ENCODE measurements at regions of chr3 and their contacts with region 1.

Region 1: DNA sequence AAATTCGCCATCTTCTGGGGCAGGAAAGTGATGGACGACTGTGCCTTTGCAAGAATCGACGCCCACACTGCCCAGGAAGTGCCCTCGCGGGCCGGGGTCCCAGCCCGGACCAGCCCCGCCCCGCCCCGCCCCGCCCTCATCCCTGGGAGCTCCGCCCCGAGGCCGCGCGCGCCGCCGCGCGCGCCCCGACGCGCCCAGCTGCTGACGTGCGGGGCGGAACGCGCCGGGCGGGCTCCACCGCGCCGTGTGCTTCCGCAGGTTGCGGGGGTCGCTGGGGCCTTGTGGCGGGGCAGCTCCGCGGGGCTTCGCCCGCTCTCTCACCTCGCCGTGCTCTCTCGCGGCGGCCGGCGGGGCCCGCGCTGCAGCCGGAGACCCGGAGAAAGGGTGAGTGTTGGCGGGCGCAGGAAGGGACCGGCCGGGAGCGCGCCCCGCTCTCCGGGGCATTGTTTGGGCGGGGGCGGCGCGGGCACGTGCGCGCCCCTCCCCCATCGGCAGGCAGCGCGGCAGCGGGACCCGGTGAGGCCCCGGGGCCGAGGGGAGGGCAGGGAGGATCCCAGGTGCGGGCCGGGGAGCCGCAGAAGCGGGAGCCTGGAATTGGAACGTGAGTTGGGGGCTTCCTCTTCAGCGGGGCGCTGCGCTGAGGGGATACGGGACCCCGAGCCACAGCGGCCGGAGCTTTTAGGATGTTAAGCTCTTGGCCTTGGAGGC is at the start of gene YEATS2:
- DNase-seq: peak; percentile 61
- ATAC-seq: peak; percentile 90
- H3K4me3 ChIP-seq: peak within 1 kb of the TSS; percentile 99
- H3K27ac ChIP-seq: peak within 1 kb of the TSS; percentile 96
- H3K4me1 ChIP-seq: peaks cover 2% of the 10 kb centered on the region
- H3K27me3 ChIP-seq: no peaks in the 10 kb centered on the region
- CTCF ChIP-seq: no peak
- POLR2A ChIP-seq: peak; percentile 75; the same call in 1 of the 2 replicates
- RAD21 ChIP-seq: no peak
- total RNA-seq, gene YEATS2: 43.0 and 45.0 TPM in 2 replicates

Region 2: DNA sequence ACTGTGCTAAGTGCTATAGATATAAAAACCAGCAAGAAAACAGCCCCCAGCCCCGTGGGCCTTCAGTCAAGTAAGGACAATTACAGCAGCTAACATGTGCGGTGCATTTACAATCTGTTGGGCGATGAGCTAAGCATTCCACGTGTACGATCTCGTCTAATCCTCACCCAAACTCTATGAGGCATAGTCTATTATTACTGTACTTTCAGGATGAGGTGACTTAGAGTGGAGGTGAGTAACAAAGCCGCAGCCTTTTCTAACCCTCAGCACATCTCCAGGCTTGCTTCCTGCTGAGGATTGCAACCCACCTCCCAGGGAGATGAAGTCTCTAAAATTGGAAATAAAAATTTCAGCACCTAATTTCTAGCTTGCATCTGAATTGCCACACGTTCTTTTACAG is 216.2 kb before region 1 on chr3:
- CTCF ChIA-PET with region 1: no interaction called
- POLR2A ChIA-PET with region 1: no interaction called
- dilution Hi-C with region 1: no loop called
- in situ Hi-C with region 1: no loop called
- intact Hi-C with region 1: loop called (anchors 2 kb)
- DNase-seq: peak; percentile 50
- ATAC-seq: no peak
- H3K4me3 ChIP-seq: no peak overlapping the region
- H3K27ac ChIP-seq: no peak overlapping the region
- H3K4me1 ChIP-seq: peaks cover 5% of the 10 kb centered on the region
- H3K27me3 ChIP-seq: peaks cover 3% of the 10 kb centered on the region
- CTCF ChIP-seq: no peak
- POLR2A ChIP-seq: no peak
- RAD21 ChIP-seq: no peak

Region 3: DNA sequence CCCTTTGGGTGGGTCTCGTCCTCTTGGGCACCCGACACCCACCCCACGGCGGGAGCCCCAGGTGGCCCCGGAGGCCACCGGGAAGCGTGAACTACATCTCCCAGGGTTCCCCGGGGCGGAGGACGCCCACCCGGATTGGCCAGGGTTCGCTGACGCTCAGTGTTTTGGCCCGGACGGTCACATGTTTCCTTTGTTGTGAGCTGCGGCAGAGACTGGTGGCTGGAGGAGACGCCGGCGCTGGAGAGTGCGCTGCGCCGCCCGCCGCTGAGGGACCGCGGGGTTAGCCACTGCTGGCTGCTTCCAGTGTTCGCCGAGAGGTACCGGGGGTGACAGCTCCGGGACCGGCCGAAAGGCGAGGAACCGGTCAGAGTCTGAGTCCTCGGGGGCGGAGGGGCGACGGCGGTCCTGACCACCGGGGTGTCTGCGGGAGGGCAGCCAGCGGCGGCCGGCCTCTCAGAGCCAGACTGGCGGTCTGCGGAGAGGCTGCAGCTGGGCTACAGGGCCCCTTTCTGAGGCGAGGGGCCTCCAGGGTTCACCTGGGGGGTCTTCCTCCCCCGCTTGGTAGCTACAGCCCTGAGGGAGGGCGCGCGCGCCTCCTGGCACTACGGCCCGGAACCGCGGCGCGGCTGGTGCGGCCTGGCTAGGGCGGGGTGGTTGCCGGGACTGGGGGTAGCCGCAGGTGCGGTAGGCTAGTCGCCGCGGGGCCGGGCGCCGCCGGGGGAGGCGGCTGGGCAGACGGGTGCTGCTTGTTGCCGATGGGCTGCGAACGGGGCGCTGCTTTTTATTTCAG is 62.1 kb before region 1 on chr3 and contains the start of gene KLHL24:
- CTCF ChIA-PET with region 1: no interaction called
- POLR2A ChIA-PET with region 1: no interaction called
- dilution Hi-C with region 1: no loop called
- in situ Hi-C with region 1: no loop called
- intact Hi-C with region 1: loop called (anchors 2 kb)
- DNase-seq: peak; percentile 91
- ATAC-seq: peak; percentile 88
- H3K4me3 ChIP-seq: peak within 1 kb of the TSS; percentile 85
- H3K27ac ChIP-seq: peak within 1 kb of the TSS; percentile 38
- H3K4me1 ChIP-seq: no peaks in the 10 kb centered on the region
- H3K27me3 ChIP-seq: no peaks in the 10 kb centered on the region
- CTCF ChIP-seq: no peak
- POLR2A ChIP-seq: peak; percentile 90
- RAD21 ChIP-seq: no peak
- total RNA-seq, gene KLHL24: 25.6 and 28.3 TPM in 2 replicates

Region 4: DNA sequence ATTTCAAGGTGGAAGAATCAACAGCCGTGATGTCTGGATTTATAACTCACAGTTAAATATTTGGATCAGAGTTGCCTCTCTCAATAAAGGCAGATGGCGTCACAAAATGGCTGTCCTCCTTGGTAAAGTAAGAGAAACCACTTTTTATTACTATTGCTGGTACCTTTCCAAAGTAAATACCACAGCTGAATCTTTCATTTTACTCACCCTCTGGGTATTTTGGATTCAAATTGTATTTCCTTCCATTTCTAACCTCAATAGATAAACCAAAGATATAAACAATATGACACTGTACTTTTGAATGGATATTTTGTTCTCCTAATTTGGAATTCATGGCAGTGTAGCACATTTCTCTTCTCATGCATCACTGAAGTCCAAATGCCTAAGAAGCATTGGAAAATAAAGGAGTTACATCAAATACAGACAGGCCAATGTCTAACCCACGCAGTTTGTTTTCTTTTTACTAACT is 32.8 kb before region 1 on chr3:
- CTCF ChIA-PET with region 1: interaction called, 3 read pairs
- POLR2A ChIA-PET with region 1: no interaction called
- dilution Hi-C with region 1: no loop called
- in situ Hi-C with region 1: no loop called
- intact Hi-C with region 1: loop called (anchors 2 kb)
- DNase-seq: peak; percentile 96
- ATAC-seq: peak; percentile 96
- H3K4me3 ChIP-seq: no peak overlapping the region
- H3K27ac ChIP-seq: no peak overlapping the region
- H3K4me1 ChIP-seq: no peaks in the 10 kb centered on the region; the same call in 1 of the 2 replicates
- H3K27me3 ChIP-seq: no peaks in the 10 kb centered on the region
- CTCF ChIP-seq: no peak
- POLR2A ChIP-seq: no peak
- RAD21 ChIP-seq: no peak

Region 5: DNA sequence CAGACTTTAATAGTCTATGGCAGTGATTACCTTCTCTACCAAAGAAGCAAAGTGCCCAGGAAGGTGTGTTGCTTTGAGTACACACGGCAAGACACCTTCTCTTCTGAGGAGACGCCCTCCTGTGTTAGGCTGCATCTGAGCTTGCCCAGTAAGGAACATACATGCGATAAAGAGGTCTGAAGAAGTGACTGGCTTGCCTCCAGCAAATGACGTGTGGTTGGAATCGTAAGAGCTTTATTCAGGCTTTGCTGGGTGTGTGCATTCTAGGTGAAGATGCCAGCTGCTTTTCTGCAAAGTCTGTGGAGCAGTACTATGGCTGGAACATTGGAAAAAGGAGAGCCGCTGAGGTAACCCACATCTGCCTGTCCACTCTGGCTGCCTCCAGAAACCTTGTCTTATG is 105.2 kb after region 1 on chr3:
- CTCF ChIA-PET with region 1: no interaction called
- POLR2A ChIA-PET with region 1: no interaction called
- dilution Hi-C with region 1: no loop called
- in situ Hi-C with region 1: no loop called
- intact Hi-C with region 1: no loop called
- DNase-seq: no peak
- ATAC-seq: no peak
- H3K4me3 ChIP-seq: no peak overlapping the region
- H3K27ac ChIP-seq: no peak overlapping the region
- H3K4me1 ChIP-seq: no peaks in the 10 kb centered on the region
- H3K27me3 ChIP-seq: no peaks in the 10 kb centered on the region
- CTCF ChIP-seq: no peak
- POLR2A ChIP-seq: no peak
- RAD21 ChIP-seq: no peak